CD8-positive, alpha-beta T cell (primary cell): ENCODE measurements at regions of chr1 and their contacts with region 1.

Region 1: GRCh38 chr1:41407664-41408252 is 46.5 kb downstream of the FOXO6 start:
- DNase-seq: no peak
- ATAC-seq: no peak
- H3K4me3 ChIP-seq: no peak overlapping the region
- H3K4me3 Mint-ChIP-seq: no peak overlapping the region
- H3K27ac ChIP-seq: no peak overlapping the region
- H3K27ac Mint-ChIP-seq: no peak overlapping the region
- H3K4me1 ChIP-seq: peaks cover 5% of the 10 kb centered on the region
- H3K4me1 Mint-ChIP-seq: no peaks in the 10 kb centered on the region
- H3K27me3 ChIP-seq: no peaks in the 10 kb centered on the region
- H3K27me3 Mint-ChIP-seq: peaks cover 27% of the 10 kb centered on the region
- CTCF ChIP-seq: no peak

Region 2: DNA sequence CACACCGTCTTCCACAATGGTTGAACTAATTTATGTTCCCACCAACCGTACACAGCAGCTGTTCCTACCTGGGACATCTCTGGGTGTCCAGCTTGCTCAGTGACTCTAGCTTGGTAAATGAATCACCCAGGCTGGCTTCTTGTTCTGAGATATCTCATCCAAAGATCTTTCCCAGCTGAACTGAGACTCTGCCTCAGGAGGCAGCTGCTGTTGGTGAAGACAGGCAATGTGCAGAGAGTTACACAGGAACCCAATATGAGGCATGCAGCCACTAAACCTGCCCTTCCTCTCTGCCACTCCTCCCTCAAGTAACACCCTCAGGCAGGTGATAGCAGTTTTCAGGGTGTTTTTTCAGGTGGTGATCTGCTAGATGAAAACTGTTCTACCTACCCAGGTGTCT is 60.5 kb before region 1 on chr1:
- CTCF ChIA-PET with region 1: no interaction called
- POLR2A ChIA-PET with region 1: no interaction called
- intact Hi-C with region 1: loop called in 1 of 2 experiments (anchors 5 kb)
- DNase-seq: peak in 2 of 9 experiments; percentile 8 to 29
- ATAC-seq: no peak
- H3K4me3 ChIP-seq: no peak overlapping the region
- H3K4me3 Mint-ChIP-seq: no peak overlapping the region
- H3K27ac ChIP-seq: no peak overlapping the region
- H3K27ac Mint-ChIP-seq: no peak overlapping the region
- H3K4me1 ChIP-seq: no peaks in the 10 kb centered on the region
- H3K4me1 Mint-ChIP-seq: peaks cover 3% of the 10 kb centered on the region
- H3K27me3 ChIP-seq: no peaks in the 10 kb centered on the region
- H3K27me3 Mint-ChIP-seq: peaks cover 10% of the 10 kb centered on the region
- CTCF ChIP-seq: no peak

Region 3: DNA sequence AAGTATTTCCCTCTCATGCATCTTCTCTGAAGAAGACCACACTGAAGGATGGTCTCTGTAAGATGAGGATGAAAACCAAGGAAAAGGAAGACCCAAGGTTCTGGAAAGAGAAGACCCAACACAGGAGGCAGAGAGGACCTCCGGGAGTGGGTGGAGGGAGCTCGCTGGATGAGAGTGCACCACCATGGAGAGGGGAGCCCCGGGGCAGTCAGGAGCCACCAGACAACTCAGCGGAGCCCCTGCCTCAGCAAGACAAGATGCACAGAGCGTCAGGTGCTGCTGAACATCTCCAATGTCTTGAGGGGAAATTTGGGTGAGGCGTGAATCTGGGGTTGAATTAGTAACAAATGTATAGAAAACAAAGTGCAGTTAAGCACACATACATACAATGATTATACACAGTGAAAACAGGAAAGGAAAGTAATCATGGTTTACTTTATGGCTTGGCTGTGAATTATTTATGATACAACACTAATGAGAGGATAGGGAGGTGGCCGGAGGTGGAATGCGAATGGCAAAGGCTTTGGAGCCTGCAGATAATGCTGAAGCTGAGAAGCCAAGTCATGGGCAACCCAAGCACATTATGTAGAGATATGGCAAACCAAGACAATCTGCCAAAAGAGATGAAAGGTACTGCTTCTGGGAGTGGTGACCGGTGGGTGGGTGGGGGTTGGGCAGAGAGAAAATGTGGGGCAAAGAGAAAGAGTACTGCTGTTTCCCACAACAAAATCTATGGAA is 157.1 kb after region 1 on chr1:
- CTCF ChIA-PET with region 1: no interaction called
- POLR2A ChIA-PET with region 1: no interaction called
- intact Hi-C with region 1: no loop called
- DNase-seq: peak in 1 of 9 experiments; percentile 21
- ATAC-seq: no peak
- H3K4me3 ChIP-seq: no peak overlapping the region
- H3K4me3 Mint-ChIP-seq: no peak overlapping the region
- H3K27ac ChIP-seq: no peak overlapping the region
- H3K27ac Mint-ChIP-seq: no peak overlapping the region
- H3K4me1 ChIP-seq: no peaks in the 10 kb centered on the region
- H3K4me1 Mint-ChIP-seq: peaks cover 4% of the 10 kb centered on the region
- H3K27me3 ChIP-seq: no peaks in the 10 kb centered on the region
- H3K27me3 Mint-ChIP-seq: no peaks in the 10 kb centered on the region
- CTCF ChIP-seq: no peak